ENCODE measurements at regions of chr13 and their contacts with region 1.

Region 1: GRCh38 chr13:75760131-75761021 is 124.2 kb downstream of the LMO7 start:
- DNase-seq: peak; percentile 63 to 94
- H3K4me3 ChIP-seq: peak overlapping the region; percentile 59
- H3K27ac ChIP-seq: peak overlapping the region; percentile 97
- H3K4me1 ChIP-seq: peaks cover 30% of the 10 kb centered on the region
- H3K27me3 ChIP-seq: no peaks in the 10 kb centered on the region
- CTCF ChIP-seq: peak; percentile 44

Region 2: GRCh38 chr13:75647126-75647784 is 113.1 kb before region 1 on chr13:
- CTCF ChIA-PET with region 1: no interaction called
- POLR2A ChIA-PET with region 1: no interaction called
- intact Hi-C with region 1: no loop called
- DNase-seq: no peak
- H3K4me3 ChIP-seq: no peak overlapping the region
- H3K27ac ChIP-seq: no peak overlapping the region
- H3K4me1 ChIP-seq: no peaks in the 10 kb centered on the region
- H3K27me3 ChIP-seq: no peaks in the 10 kb centered on the region
- CTCF ChIP-seq: no peak

Region 3: DNA sequence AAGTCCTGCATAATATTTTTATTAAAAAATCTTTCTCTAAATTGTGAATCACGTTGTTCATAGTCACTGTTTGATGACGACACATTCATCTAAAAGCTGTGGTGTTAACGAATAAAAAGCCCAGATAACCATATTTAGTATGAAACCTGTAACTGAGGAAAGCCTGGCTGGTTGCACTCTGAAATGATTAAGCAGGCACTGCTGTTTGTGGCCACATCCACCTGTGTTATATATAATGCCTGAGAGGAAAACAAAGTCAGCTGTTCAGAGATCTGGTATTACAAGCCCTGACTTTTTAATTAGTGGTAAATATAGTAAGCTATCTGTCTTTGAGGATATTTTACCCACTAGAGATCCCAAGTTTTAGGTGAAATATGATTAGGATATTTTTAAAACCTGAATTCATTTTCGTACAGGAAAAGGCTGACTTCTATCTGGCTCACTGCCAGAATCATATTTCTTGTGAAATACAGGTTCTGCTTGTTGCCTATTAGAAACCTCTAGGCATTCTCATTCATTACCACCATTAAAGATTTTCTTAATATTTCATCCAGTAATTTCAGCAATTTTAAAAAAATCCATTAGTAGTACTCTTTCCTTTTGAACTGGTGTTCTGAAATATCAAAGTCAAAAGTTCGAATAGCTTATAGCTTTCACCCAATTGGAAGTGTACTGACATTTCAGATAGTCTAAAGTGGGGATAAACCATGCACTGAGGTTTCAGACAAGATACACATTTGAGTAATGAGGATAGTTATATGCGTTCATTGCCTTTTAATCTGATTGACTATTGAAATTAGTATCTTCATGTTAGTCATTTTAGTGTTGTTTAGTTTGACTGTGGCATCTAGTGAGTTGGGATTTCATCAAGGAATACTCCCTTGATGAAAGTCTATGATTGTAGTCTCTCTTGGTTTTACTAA is 44.5 kb before region 1 on chr13:
- CTCF ChIA-PET with region 1: no interaction called
- POLR2A ChIA-PET with region 1: interaction called, 3 read pairs
- intact Hi-C with region 1: loop called (anchors 1 kb)
- DNase-seq: peak in 1 of 2 experiments; percentile 52
- H3K4me3 ChIP-seq: no peak overlapping the region
- H3K27ac ChIP-seq: peak overlapping the region; percentile 95
- H3K4me1 ChIP-seq: peaks cover 21% of the 10 kb centered on the region
- H3K27me3 ChIP-seq: no peaks in the 10 kb centered on the region
- CTCF ChIP-seq: no peak

Region 4: GRCh38 chr13:75724752-75725504 is 35.4 kb before region 1 on chr13:
- CTCF ChIA-PET with region 1: interaction called, 3 read pairs
- POLR2A ChIA-PET with region 1: interaction called, 14 read pairs
- intact Hi-C with region 1: loop called (anchors 1 kb)
- DNase-seq: peak in 1 of 2 experiments; percentile 82
- H3K4me3 ChIP-seq: peak overlapping the region; percentile 25; the same call in 1 of the 2 replicates
- H3K27ac ChIP-seq: peak overlapping the region; percentile 94
- H3K4me1 ChIP-seq: peaks cover 37% of the 10 kb centered on the region
- H3K27me3 ChIP-seq: no peaks in the 10 kb centered on the region
- CTCF ChIP-seq: no peak

Region 5: DNA sequence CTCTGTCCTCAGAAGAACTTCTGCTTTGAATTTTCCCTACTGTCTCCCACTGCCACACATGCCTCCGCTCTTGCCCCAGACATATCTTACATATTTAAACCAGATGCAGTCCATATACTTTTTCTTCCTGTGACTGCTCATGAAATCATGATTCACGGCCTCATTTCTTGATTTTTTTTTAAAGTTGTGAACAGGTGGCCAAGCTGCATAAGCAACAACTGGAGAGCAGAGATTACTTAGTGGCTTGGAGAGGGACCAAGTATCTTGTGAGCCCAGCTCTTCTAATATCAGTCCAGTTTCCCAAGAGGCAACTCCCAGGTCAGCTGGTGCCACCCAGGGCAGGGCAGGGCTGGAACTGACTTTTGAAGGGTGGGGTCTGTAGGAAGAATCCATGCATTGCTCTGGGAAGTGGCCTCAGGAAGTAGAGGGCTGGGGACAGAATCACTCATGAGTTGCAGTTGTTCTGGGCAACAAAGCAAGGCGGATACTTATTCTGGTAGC is 28.2 kb after region 1 on chr13:
- CTCF ChIA-PET with region 1: interaction called, 4 read pairs
- POLR2A ChIA-PET with region 1: interaction called, 4 read pairs
- intact Hi-C with region 1: loop called (anchors 1 kb)
- DNase-seq: peak; percentile 52 to 82
- H3K4me3 ChIP-seq: no peak overlapping the region
- H3K27ac ChIP-seq: peak overlapping the region; percentile 10; the same call in 1 of the 2 replicates
- H3K4me1 ChIP-seq: 0 out of 2 replicates have a peak, but pooled peaks cover 4% of the 10 kb centered on the region
- H3K27me3 ChIP-seq: no peaks in the 10 kb centered on the region
- CTCF ChIP-seq: no peak

Region 6: DNA sequence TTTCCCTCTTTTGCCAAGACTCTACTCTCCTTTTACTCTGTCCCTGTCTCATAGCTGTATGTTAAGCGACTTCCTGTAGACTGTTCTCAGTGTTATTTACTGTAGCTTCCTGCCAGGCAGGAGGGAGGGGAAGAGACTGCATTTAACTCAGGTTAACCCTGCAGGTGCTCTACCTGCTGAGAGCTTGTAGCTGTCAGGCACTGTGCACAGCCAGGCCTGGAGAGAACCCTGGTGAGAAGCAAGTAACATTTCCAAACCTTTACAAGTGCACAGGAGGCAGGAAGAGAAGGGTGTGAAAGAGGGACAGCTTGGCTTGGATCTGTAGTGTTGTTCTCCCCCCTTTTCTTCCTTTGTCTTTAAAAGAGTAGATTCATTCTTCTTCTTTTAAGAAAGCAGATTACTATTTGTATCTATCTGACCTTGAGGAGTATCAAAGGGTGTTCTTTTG is 42.8 kb after region 1 on chr13:
- CTCF ChIA-PET with region 1: no interaction called
- POLR2A ChIA-PET with region 1: interaction called, 4 read pairs
- intact Hi-C with region 1: loop called (anchors 5 kb)
- DNase-seq: no peak
- H3K4me3 ChIP-seq: no peak overlapping the region
- H3K27ac ChIP-seq: no peak overlapping the region
- H3K4me1 ChIP-seq: peaks cover 6% of the 10 kb centered on the region; the same call in 1 of the 2 replicates
- H3K27me3 ChIP-seq: no peaks in the 10 kb centered on the region
- CTCF ChIP-seq: no peak